ENCODE measurements at regions of chr12 and their contacts with region 1.

Region 1: GRCh38 chr12:103140286-103140685 is 182.8 kb downstream of the ASCL1 start:
- DNase-seq: no peak
- ATAC-seq: no peak
- H3K4me3 ChIP-seq: no peak overlapping the region
- H3K27ac ChIP-seq: no peak overlapping the region
- H3K4me1 ChIP-seq: no peaks in the 10 kb centered on the region
- H3K27me3 ChIP-seq: no peaks in the 10 kb centered on the region
- CTCF ChIP-seq: no peak
- EP300 ChIP-seq: no peak
- POLR2A ChIP-seq: no peak
- RAD21 ChIP-seq: no peak

Region 2: DNA sequence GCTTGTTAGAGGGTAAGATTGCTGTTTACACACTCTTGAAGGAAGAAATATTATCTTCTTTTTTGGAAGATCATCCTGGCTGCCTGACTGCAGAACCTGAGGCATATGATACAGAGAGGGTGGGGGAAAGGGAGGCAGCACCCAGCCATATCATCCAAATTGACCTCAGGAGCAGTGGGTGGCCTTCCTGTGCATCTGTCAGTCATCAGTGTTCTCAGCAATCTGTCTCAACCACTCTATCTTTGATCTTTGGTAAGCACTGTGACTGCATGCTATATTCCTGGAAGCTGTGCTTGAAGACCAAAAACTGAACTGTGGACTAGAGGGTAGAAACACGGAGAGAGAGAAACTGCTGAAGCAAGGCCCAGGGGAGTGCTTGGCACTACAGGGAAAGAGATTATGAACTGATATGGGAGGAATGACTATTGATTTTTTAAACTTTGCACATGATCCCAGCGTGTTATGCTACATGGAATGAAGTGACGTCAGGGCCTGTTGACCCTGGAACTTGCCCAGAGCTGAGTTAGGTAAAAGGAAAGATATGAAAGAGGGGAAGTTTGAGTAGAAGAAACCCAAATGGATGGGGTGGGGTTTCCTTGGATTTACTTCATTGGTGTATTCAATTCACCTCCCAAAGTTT is 11.3 kb before region 1 on chr12:
- CTCF ChIA-PET with region 1: interaction called, 12 read pairs
- POLR2A ChIA-PET with region 1: interaction called, 4 read pairs
- RAD21 ChIA-PET with region 1: no interaction called
- SMC1A ChIA-PET with region 1: interaction called, 19 read pairs
- in situ Hi-C with region 1: no loop called
- intact Hi-C with region 1: no loop called
- DNase-seq: no peak
- ATAC-seq: no peak
- H3K4me3 ChIP-seq: no peak overlapping the region
- H3K27ac ChIP-seq: no peak overlapping the region
- H3K4me1 ChIP-seq: no peaks in the 10 kb centered on the region
- H3K27me3 ChIP-seq: no peaks in the 10 kb centered on the region
- CTCF ChIP-seq: no peak
- EP300 ChIP-seq: no peak
- POLR2A ChIP-seq: no peak
- RAD21 ChIP-seq: no peak

Region 3: GRCh38 chr12:103518899-103519298 is 378.6 kb after region 1 on chr12:
- CTCF ChIA-PET with region 1: no interaction called
- POLR2A ChIA-PET with region 1: no interaction called
- RAD21 ChIA-PET with region 1: no interaction called
- SMC1A ChIA-PET with region 1: no interaction called
- in situ Hi-C with region 1: no loop called
- intact Hi-C with region 1: no loop called
- DNase-seq: no peak
- ATAC-seq: peak; percentile 51
- H3K4me3 ChIP-seq: no peak overlapping the region
- H3K27ac ChIP-seq: no peak overlapping the region
- H3K4me1 ChIP-seq: no peaks in the 10 kb centered on the region
- H3K27me3 ChIP-seq: no peaks in the 10 kb centered on the region
- CTCF ChIP-seq: no peak
- EP300 ChIP-seq: no peak
- POLR2A ChIP-seq: no peak
- RAD21 ChIP-seq: no peak